ENCODE measurements at regions of chr16 and their contacts with region 1.

Region 1: GRCh38 chr16:54882556-54882955 is 48.1 kb upstream of the IRX5 start:
- DNase-seq: no peak
- ATAC-seq: no peak
- H3K4me3 ChIP-seq: no peak overlapping the region
- H3K4me3 Mint-ChIP-seq: no peak overlapping the region
- H3K27ac ChIP-seq: no peak overlapping the region
- H3K27ac Mint-ChIP-seq: no peak overlapping the region
- H3K4me1 ChIP-seq: no peaks in the 10 kb centered on the region
- H3K4me1 Mint-ChIP-seq: no peaks in the 10 kb centered on the region
- H3K27me3 ChIP-seq: peaks cover 0 to 3% of the 10 kb centered on the region in 2 experiments
- H3K27me3 Mint-ChIP-seq: peaks cover 11 to 22% of the 10 kb centered on the region in 2 donors

Region 2: DNA sequence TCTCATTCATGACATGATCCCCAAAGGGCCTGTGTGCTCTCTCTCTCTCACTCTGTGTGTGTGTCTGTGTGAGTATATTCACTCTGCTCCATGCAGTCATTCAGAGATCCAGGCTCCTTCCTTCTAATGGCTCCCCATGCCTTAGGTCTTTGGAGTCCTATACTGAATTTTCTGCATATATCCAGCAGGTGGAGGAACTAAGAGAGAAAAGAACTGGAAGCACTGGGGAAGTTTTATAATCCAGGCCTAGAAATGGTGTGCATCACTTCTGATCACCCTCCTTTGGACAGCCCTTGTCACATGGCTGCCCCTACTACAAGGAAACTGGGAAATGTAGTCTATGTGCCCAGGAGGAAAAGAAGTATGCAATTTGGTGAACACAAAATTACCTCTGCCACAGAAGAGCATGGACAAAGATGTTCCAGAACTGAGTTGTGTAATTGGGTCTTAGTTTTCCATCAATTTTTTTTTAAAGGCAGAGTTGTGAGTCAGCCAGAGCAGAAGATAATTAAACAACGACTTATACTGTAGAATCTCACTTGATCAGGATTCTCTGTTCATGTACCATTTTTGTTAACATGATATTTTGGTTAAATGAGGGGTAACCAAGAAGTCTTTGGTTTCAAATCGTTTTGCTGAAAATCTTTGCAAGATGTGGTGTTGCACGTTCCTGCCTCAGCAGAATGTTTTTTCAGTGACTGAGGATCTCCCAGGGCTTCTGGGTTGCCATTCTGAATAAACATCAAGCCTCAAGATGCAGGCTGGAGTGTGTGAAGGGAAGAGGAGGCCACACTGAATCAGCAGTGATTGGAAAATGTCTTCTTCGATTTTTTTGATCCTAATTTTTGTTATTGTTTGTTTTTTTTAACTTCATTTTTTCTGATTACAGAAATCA is 363.5 kb before region 1 on chr16:
- CTCF ChIA-PET with region 1: no interaction called
- POLR2A ChIA-PET with region 1: no interaction called
- DNase-seq: no peak
- ATAC-seq: no peak
- H3K4me3 ChIP-seq: no peak overlapping the region
- H3K4me3 Mint-ChIP-seq: no peak overlapping the region
- H3K27ac ChIP-seq: no peak overlapping the region
- H3K27ac Mint-ChIP-seq: no peak overlapping the region
- H3K4me1 ChIP-seq: no peaks in the 10 kb centered on the region
- H3K4me1 Mint-ChIP-seq: no peaks in the 10 kb centered on the region
- H3K27me3 ChIP-seq: peaks cover 0 to 3% of the 10 kb centered on the region in 2 experiments
- H3K27me3 Mint-ChIP-seq: peaks cover 0 to 16% of the 10 kb centered on the region in 2 donors

Region 3: DNA sequence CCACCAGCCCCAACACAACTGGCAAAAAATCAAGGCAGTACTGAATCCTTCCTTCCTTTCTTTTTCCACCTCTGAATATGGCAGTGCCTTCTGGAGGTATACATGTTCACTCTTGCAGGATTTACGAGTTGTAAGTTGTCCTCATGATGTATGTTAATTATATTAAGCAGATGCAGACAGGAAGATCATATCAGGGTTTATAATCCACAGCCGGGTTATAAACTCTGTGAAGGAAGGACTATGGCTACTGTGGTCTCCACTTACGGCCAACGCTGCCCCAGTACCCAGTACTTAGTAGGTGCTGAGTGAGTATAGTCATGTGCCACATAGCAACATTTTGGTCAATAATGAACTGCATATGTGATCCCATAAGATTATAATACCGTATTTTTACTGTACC is 28.5 kb after region 1 on chr16:
- CTCF ChIA-PET with region 1: no interaction called
- POLR2A ChIA-PET with region 1: interaction called in 1 of 2 experiments, 11 read pairs
- DNase-seq: no peak
- ATAC-seq: no peak
- H3K4me3 ChIP-seq: no peak overlapping the region
- H3K4me3 Mint-ChIP-seq: no peak overlapping the region
- H3K27ac ChIP-seq: no peak overlapping the region
- H3K27ac Mint-ChIP-seq: no peak overlapping the region
- H3K4me1 ChIP-seq: no peaks in the 10 kb centered on the region
- H3K4me1 Mint-ChIP-seq: no peaks in the 10 kb centered on the region
- H3K27me3 ChIP-seq: peaks cover 0 to 7% of the 10 kb centered on the region in 2 experiments
- H3K27me3 Mint-ChIP-seq: peaks cover 13 to 22% of the 10 kb centered on the region in 2 donors